ENCODE measurements at regions of chr19 and their contacts with region 1.

Region 1: GRCh38 chr19:29263305-29264135 is 50.6 kb upstream of the UQCRFS1 start:
- DNase-seq: peak; percentile 65
- H3K4me3 Mint-ChIP-seq: no peak overlapping the region
- H3K27ac Mint-ChIP-seq: no peak overlapping the region
- H3K4me1 Mint-ChIP-seq: no peaks in the 10 kb centered on the region
- H3K27me3 Mint-ChIP-seq: peaks cover 11% of the 10 kb centered on the region

Region 2: GRCh38 chr19:28737021-28737895 is 526.3 kb before region 1 on chr19:
- CTCF ChIA-PET with region 1: interaction called, 11 read pairs
- POLR2A ChIA-PET with region 1: no interaction called
- intact Hi-C with region 1: loop called (anchors 5 kb)
- DNase-seq: no peak
- H3K4me3 Mint-ChIP-seq: no peak overlapping the region
- H3K27ac Mint-ChIP-seq: no peak overlapping the region
- H3K4me1 Mint-ChIP-seq: no peaks in the 10 kb centered on the region
- H3K27me3 Mint-ChIP-seq: peaks cover 1% of the 10 kb centered on the region

Region 3: DNA sequence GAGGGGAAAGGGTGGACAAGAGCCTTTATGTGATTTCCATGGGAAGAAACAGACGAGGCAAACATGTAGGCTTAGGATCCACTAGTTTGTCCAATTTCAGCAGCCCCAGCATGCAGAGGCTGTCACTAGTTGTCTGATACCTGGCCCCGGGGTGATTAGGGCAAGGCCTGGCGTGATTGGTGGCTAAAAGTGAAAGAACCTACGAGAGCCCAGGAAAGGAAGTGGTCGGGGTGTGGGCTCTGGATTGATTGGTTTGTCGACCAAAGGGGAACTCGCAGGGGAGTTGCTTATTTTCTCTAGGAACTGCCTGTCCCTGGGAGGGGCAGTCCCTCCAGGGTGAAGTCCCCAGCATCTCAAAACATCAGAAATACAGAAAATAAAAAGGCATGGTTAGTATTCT is 13.6 kb after region 1 on chr19:
- CTCF ChIA-PET with region 1: interaction called, 23 read pairs
- POLR2A ChIA-PET with region 1: no interaction called
- intact Hi-C with region 1: no loop called
- DNase-seq: peak; percentile 75
- H3K4me3 Mint-ChIP-seq: no peak overlapping the region
- H3K27ac Mint-ChIP-seq: no peak overlapping the region
- H3K4me1 Mint-ChIP-seq: peaks cover 6% of the 10 kb centered on the region
- H3K27me3 Mint-ChIP-seq: peaks cover 15% of the 10 kb centered on the region